ENCODE measurements at regions of chr16 and their contacts with region 1.

Region 1: GRCh38 chr16:87571136-87571867 is 31.0 kb upstream of the JPH3 start:
- DNase-seq: peak; percentile 80 to 83
- H3K4me3 ChIP-seq: no peak overlapping the region
- H3K4me3 Mint-ChIP-seq: peak overlapping the region; percentile 19
- H3K27ac Mint-ChIP-seq: no peak overlapping the region
- H3K4me1 ChIP-seq: peaks cover 9% of the 10 kb centered on the region; the same call in 1 of the 2 replicates
- H3K4me1 Mint-ChIP-seq: no peaks in the 10 kb centered on the region
- H3K27me3 ChIP-seq: no peaks in the 10 kb centered on the region
- H3K27me3 Mint-ChIP-seq: no peaks in the 10 kb centered on the region
- CTCF ChIP-seq: peak; percentile 44 to 85

Region 2: DNA sequence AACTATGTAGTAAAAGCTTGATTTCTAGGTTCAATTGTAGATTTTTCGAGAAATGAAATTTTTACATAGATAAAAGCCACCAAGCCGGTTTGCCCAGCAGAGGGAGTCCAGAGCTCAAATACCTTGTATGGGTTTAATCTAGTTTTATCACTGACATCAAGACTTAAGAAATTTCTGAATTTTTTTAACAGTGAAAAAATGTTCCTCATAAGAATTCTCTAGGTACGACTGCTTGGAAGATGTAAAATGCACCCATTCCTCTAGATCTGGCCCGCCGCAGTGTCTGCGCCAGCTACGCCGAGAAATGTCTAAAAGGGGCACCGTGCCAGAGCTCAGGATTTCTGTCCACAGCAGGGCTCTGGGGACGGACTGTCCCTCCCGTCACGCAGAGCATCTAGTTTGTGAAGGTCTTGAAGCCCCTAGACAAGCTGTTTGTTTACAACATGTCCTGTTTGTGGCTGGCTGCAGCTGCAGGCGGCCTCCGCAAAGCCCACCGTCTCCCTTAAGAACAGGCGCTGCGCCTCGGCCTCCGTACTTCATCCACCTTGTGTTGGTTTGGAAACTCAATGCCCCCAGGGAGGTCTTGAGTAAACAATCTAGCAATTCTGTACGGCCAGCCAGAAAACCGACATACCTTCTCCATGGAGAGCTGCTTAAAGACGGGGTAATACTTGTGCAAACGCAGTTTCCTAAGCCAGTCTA is 154.3 kb before region 1 on chr16:
- CTCF ChIA-PET with region 1: interaction called, 16 read pairs
- POLR2A ChIA-PET with region 1: no interaction called
- intact Hi-C with region 1: loop called (anchors 10 kb)
- DNase-seq: no peak
- H3K4me3 ChIP-seq: no peak overlapping the region
- H3K4me3 Mint-ChIP-seq: no peak overlapping the region
- H3K27ac Mint-ChIP-seq: no peak overlapping the region
- H3K4me1 ChIP-seq: peaks cover 16% of the 10 kb centered on the region
- H3K4me1 Mint-ChIP-seq: peaks cover 12% of the 10 kb centered on the region
- H3K27me3 ChIP-seq: no peaks in the 10 kb centered on the region
- H3K27me3 Mint-ChIP-seq: no peaks in the 10 kb centered on the region
- CTCF ChIP-seq: peak; percentile 46 to 63

Region 3: DNA sequence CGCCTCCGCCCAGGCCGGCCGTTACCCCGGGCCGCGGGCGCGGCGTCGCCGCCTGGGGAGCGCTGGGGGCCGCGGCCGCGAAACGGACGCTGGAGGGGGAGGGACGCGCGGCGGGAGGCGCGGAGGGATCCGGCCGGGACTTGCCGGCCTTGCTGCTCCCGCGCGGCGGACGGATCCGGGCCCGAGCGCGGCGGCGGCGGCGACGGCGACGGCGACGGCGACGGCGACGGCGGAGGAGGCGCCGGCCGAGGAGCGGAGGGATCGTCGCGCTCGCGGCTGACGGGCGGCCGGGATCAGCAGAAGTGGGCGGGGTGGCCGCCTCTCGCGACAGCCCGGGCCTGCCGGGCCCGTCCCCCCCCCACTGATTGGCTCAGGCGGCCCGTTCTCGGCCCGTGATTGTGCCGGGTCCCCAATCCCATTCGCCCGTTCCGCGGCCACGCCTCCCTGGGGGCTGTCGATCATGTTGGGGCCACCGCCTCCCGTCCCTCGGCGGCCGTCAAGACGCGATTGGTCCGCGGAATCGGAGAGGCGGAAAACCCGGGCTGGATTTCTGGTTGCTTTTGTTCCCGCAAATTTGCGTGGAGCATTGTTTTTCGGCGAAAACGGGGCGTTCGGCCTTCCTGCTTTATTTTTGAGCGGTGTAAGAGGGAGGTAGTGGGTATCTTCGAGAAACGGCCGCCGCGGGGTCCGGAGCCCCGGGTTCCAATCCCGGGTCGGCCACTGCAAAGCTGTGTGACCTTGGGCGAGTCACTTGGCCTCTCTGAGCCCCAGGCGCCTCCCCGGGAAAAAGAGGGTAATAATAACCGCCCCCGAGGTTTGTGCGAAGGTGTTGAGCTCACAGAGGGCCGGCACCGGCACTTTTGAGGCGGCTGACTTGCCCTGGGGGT is 78.3 kb before region 1 on chr16 and contains the start of gene ZCCHC14:
- CTCF ChIA-PET with region 1: interaction called, 4 read pairs
- POLR2A ChIA-PET with region 1: no interaction called
- intact Hi-C with region 1: loop called (anchors 5 kb)
- DNase-seq: peak; percentile 99 to 100
- H3K4me3 ChIP-seq: peak within 1 kb of the TSS; percentile 65
- H3K4me3 Mint-ChIP-seq: peak within 1 kb of the TSS; percentile 98
- H3K27ac Mint-ChIP-seq: peak within 1 kb of the TSS; percentile 92
- H3K4me1 ChIP-seq: 0 out of 2 replicates have a peak, but pooled peaks cover 4% of the 10 kb centered on the region
- H3K4me1 Mint-ChIP-seq: peaks cover 29% of the 10 kb centered on the region
- H3K27me3 ChIP-seq: no peaks in the 10 kb centered on the region
- H3K27me3 Mint-ChIP-seq: no peaks in the 10 kb centered on the region
- CTCF ChIP-seq: no peak
- total RNA-seq, gene ZCCHC14: 33.1 and 34.0 TPM in 2 replicates

Region 4: DNA sequence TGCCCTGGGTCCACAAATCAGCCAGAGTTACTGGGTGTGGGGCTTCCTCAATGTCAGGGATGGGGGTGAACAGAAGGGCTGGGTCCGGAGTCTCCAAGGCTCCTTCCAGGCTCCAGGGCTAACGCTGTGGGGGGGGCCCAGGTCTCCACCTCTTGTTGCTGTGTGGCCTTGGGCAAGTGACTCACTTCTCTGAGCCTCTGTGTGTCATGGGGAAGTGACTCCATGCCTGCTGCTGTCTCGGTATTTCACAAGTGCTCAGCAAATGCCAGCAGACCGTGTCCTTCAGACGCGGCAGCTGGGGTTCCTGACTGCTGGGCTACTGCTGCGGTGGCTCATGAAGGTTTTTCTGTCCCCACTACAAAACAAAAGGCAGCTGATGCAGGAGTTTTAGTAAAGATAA is 57.6 kb after region 1 on chr16:
- CTCF ChIA-PET with region 1: no interaction called
- POLR2A ChIA-PET with region 1: no interaction called
- intact Hi-C with region 1: no loop called
- DNase-seq: no peak
- H3K4me3 ChIP-seq: no peak overlapping the region
- H3K4me3 Mint-ChIP-seq: no peak overlapping the region
- H3K27ac Mint-ChIP-seq: no peak overlapping the region
- H3K4me1 ChIP-seq: no peaks in the 10 kb centered on the region
- H3K4me1 Mint-ChIP-seq: no peaks in the 10 kb centered on the region
- H3K27me3 ChIP-seq: 0 out of 2 replicates have a peak, but pooled peaks cover 2% of the 10 kb centered on the region
- H3K27me3 Mint-ChIP-seq: peaks cover 32% of the 10 kb centered on the region
- CTCF ChIP-seq: no peak

Measured in Caco-2 (cell line).